Astrocyte of the cerebellum (primary cell): ENCODE measurements at regions of chr1 and their contacts with region 1.

Region 1: GRCh38 chr1:62154687-62155086 is 40.0 kb upstream of the L1TD1 start:
- DNase-seq: no peak
- H3K4me3 ChIP-seq: no peak overlapping the region
- CTCF ChIP-seq: no peak

Region 2: GRCh38 chr1:62088436-62088835 is 66.3 kb before region 1 on chr1:
- in situ Hi-C with region 1: loop called (anchors 5 kb)
- DNase-seq: no peak
- H3K4me3 ChIP-seq: no peak overlapping the region
- CTCF ChIP-seq: no peak

Region 3: DNA sequence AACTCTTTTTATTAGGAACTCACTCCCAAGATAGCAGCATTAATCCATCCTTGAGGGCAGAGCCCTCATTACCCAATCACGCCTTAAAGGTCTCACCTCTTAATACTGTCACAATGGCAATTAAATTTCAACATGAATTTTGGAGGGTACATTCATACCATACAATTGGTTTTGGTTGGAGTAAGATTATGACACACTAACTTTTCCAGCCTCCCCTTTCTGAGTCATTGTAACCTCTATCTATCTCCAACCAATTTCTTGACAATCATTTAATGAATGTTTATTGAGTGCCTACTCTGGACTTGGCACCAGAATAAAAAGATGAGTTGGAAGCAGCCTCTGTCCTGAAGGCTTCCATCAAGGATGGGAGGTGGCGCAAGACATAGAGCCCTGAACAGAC is 54.2 kb before region 1 on chr1:
- in situ Hi-C with region 1: no loop called
- DNase-seq: no peak
- H3K4me3 ChIP-seq: no peak overlapping the region
- CTCF ChIP-seq: no peak